ENCODE measurements at regions of chr13 and their contacts with region 1.

Region 1: GRCh38 chr13:73138643-73139491 is 80.1 kb downstream of the KLF5 start:
- DNase-seq: peak; percentile 81 to 89
- H3K4me3 ChIP-seq: no peak overlapping the region
- H3K4me3 Mint-ChIP-seq: peak overlapping the region; percentile 61
- H3K27ac Mint-ChIP-seq: peak overlapping the region; percentile 89
- H3K4me1 ChIP-seq: peaks cover 44% of the 10 kb centered on the region
- H3K4me1 Mint-ChIP-seq: peaks cover 51% of the 10 kb centered on the region
- H3K27me3 ChIP-seq: no peaks in the 10 kb centered on the region
- H3K27me3 Mint-ChIP-seq: no peaks in the 10 kb centered on the region
- CTCF ChIP-seq: no peak

Region 2: DNA sequence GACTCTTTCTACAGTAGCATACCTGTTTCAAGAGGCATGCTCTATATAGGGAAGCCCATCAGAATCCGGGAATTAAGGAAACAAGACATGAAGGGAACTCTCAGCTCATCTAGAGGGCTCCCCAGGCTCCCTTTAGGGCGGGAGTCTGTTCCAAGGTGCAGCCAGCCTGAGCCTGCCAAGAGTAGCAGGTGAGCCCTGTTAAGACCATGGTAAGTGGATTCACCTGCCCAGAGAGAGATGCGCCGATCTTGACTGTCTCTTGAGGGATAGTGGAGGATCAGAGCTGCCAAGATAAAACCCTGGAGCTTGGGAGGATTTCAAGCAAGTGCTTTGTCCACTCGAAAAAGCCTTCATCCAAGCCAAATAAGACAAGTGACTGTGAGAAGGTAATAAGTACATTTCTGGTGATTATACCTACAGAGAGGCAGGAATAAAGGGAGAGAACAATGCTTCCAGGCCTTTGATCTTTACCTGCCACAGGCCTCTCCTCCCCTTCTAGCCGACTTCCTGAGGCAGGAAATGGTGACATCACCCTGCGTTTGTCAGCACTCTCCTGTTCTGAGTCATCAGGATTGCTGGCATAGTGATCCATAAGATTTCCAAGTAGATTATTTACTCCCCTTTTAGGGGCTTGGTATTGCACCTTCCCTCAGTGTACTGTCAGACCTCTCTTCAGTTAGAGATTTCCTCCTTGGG is 48.6 kb before region 1 on chr13:
- CTCF ChIA-PET with region 1: no interaction called
- POLR2A ChIA-PET with region 1: no interaction called
- intact Hi-C with region 1: loop called (anchors 1 kb)
- DNase-seq: peak; percentile 82 to 92
- H3K4me3 ChIP-seq: no peak overlapping the region
- H3K4me3 Mint-ChIP-seq: peak overlapping the region; percentile 46
- H3K27ac Mint-ChIP-seq: peak overlapping the region; percentile 96
- H3K4me1 ChIP-seq: peaks cover 15% of the 10 kb centered on the region
- H3K4me1 Mint-ChIP-seq: peaks cover 24% of the 10 kb centered on the region
- H3K27me3 ChIP-seq: no peaks in the 10 kb centered on the region
- H3K27me3 Mint-ChIP-seq: no peaks in the 10 kb centered on the region
- CTCF ChIP-seq: no peak

Region 3: GRCh38 chr13:73171926-73172325 is 33.1 kb after region 1 on chr13:
- CTCF ChIA-PET with region 1: no interaction called
- POLR2A ChIA-PET with region 1: interaction called, 5 read pairs
- intact Hi-C with region 1: loop called (anchors 1 kb)
- DNase-seq: peak; percentile 67 to 81
- H3K4me3 ChIP-seq: no peak overlapping the region
- H3K4me3 Mint-ChIP-seq: peak overlapping the region; percentile 31
- H3K27ac Mint-ChIP-seq: peak overlapping the region; percentile 97
- H3K4me1 ChIP-seq: peaks cover 82% of the 10 kb centered on the region
- H3K4me1 Mint-ChIP-seq: peaks cover 51% of the 10 kb centered on the region
- H3K27me3 ChIP-seq: no peaks in the 10 kb centered on the region
- H3K27me3 Mint-ChIP-seq: no peaks in the 10 kb centered on the region
- CTCF ChIP-seq: peak in 1 of 2 experiments; percentile 61

Region 4: GRCh38 chr13:73248711-73249578 is 110.1 kb after region 1 on chr13:
- CTCF ChIA-PET with region 1: interaction called, 6 read pairs
- POLR2A ChIA-PET with region 1: no interaction called
- intact Hi-C with region 1: loop called (anchors 1 kb)
- DNase-seq: peak; percentile 67 to 68
- H3K4me3 ChIP-seq: no peak overlapping the region
- H3K4me3 Mint-ChIP-seq: peak overlapping the region; percentile 58
- H3K27ac Mint-ChIP-seq: peak overlapping the region; percentile 97
- H3K4me1 ChIP-seq: peaks cover 52% of the 10 kb centered on the region
- H3K4me1 Mint-ChIP-seq: peaks cover 58% of the 10 kb centered on the region
- H3K27me3 ChIP-seq: no peaks in the 10 kb centered on the region
- H3K27me3 Mint-ChIP-seq: no peaks in the 10 kb centered on the region
- CTCF ChIP-seq: no peak

Region 5: GRCh38 chr13:73399347-73400216 is 260.7 kb after region 1 on chr13:
- CTCF ChIA-PET with region 1: no interaction called
- POLR2A ChIA-PET with region 1: no interaction called
- intact Hi-C with region 1: loop called (anchors 1 kb)
- DNase-seq: peak; percentile 77 to 80
- H3K4me3 ChIP-seq: no peak overlapping the region
- H3K4me3 Mint-ChIP-seq: peak overlapping the region; percentile 36
- H3K27ac Mint-ChIP-seq: peak overlapping the region; percentile 77
- H3K4me1 ChIP-seq: peaks cover 42% of the 10 kb centered on the region
- H3K4me1 Mint-ChIP-seq: peaks cover 49% of the 10 kb centered on the region
- H3K27me3 ChIP-seq: no peaks in the 10 kb centered on the region
- H3K27me3 Mint-ChIP-seq: no peaks in the 10 kb centered on the region
- CTCF ChIP-seq: no peak

Measured in Caco-2 (cell line).